ENCODE measurements at regions of chr10 and their contacts with region 1.

Region 1: DNA sequence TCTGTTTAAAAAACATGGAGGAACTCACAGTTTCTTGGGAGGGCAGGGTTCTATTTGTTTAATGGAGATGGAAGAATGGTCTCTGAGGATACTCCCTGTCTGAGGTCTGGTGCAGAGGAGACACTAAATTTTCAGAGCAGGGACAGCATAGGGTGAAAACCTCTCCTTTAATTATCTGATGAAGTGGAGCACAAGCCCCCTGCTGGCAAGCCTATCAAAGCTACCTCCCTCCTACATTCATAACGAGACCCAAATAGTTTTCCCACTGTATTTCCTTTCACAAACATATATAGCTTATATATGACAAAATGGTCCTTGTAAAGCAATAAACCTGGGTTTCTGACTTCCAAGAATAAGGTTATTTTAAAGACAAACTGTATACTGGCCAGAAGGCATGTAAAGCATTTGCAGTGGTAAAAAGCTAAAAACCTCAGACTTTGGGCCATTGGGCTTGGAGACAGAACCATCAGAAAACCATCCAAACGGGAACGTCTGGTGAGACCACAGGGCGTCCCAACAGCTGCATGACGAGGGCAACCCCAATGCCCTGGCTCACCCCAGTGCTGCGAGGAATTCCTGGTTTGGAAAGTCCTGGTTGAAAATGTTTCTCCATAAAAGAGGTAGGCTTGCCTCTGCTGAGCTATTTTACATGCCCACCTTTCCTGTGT is 201.3 kb downstream of the FANK1 start:
- DNase-seq: no peak
- H3K4me3 ChIP-seq: no peak overlapping the region
- H3K27ac ChIP-seq: no peak overlapping the region
- H3K4me1 ChIP-seq: peaks cover 8% of the 10 kb centered on the region
- H3K27me3 ChIP-seq: peaks cover 0 to 2% of the 10 kb centered on the region in 2 experiments
- CTCF ChIP-seq: peak; percentile 20 to 38
- POLR2A ChIP-seq: no peak

Region 2: DNA sequence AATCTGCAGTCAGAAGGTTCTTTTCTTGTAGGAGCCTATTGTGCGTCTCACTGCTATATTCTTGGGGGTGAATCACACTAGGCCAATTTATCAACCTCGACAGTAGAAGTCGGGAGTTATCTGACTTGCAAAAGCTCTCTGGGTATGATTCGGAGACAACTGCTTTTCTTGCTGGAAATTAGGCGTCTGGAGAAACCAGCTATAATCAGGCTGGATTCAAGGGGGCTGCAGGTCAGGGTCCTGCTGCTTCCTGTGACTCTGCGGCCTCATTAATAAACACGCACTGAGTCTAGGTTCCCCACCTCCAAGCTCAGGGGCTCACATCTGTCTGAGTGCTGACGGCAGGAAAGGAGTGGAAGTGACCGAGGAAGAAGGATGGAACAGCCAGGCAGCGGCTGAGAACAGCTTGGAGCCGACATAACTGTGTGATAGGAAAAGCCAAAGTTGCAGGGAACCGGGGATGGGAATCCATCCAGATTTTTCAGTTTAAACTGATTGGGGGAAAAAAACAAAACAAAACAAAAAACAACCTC is 16.7 kb before region 1 on chr10:
- CTCF ChIA-PET with region 1: interaction called, 15 read pairs
- POLR2A ChIA-PET with region 1: no interaction called
- dilution Hi-C with region 1: no loop called
- intact Hi-C with region 1: no loop called
- DNase-seq: peak; percentile 83
- H3K4me3 ChIP-seq: no peak overlapping the region
- H3K27ac ChIP-seq: no peak overlapping the region
- H3K4me1 ChIP-seq: no peaks in the 10 kb centered on the region
- H3K27me3 ChIP-seq: no peaks in the 10 kb centered on the region
- CTCF ChIP-seq: no peak
- POLR2A ChIP-seq: no peak